ENCODE measurements at regions of chr9 and their contacts with region 1.

Region 1: DNA sequence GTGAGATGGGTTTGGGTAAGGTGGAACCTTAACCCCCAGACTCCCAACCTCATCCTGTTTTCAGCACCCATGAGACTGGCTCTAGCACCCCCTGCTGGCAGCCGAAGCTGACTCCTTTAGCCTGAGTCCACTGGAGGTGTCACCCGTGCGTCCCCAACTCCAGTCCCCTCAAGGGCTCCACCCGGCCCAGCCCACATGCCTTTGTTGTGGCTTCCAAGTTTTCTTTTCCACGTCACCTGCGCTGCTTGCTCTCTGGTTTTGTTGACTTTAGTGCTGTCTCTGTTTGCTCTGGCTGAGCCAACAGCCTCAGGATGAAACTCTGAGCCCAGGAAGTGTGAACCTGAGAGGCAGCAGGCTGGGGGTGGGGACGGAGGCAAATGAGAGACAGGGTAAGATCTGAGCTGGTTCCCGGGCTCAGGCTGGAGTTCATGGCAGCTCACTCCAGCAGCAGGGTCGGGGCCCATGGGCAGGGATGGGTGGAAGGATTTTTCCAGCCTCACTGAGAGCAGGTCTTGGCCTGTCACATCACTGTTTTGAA is 13.2 kb upstream of the AQP7 start:
- DNase-seq: peak; percentile 76 to 87 (median 78)
- ATAC-seq: peak; percentile 96
- H3K4me3 ChIP-seq: no peak overlapping the region
- H3K27ac ChIP-seq: no peak overlapping the region
- H3K4me1 ChIP-seq: peaks cover 19 to 32% of the 10 kb centered on the region in 2 experiments; a peak in 4 of 5 replicates
- H3K27me3 ChIP-seq: no peaks in the 10 kb centered on the region
- CTCF ChIP-seq: peak; percentile 77 to 90 (median 79)
- EP300 ChIP-seq: no peak
- POLR2A ChIP-seq: no peak
- RAD21 ChIP-seq: peak; percentile 42 to 66; a peak in 3 of 4 replicates

Region 2: DNA sequence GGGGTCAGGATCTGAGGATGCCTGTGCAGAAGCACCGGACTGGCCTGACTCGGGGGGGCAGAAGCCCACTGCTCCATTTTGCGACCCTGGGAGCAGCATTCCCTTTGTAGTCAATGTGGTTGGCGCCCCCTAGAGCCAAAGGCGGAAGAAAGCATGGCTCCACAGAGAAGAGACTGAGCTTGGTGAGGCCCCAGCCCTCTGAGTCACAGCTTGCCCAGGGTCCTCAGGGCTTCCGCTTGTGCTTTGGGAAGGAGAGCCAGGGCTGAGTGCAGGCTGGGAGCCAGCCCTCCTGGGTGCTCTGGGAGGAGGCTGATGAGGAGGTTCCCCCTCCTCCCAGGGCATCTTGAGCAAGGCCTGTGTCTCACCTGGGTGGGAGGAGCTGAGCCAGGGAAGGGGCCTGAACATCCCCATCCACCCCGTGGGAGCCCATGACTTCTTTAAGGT is 37.3 kb after region 1 on chr9:
- CTCF ChIA-PET with region 1: no interaction called
- POLR2A ChIA-PET with region 1: interaction called, 3 read pairs
- in situ Hi-C with region 1: no loop called
- intact Hi-C with region 1: loop called (anchors 5 kb)
- DNase-seq: peak; percentile 54 to 82 (median 64)
- ATAC-seq: peak; percentile 94
- H3K4me3 ChIP-seq: no peak overlapping the region
- H3K27ac ChIP-seq: peak overlapping the region; percentile 48; the same call in 2 of the 3 replicates
- H3K4me1 ChIP-seq: peaks cover 16% of the 10 kb centered on the region in 2 experiments
- H3K27me3 ChIP-seq: no peaks in the 10 kb centered on the region
- CTCF ChIP-seq: peak; percentile 64 to 90 (median 73)
- EP300 ChIP-seq: no peak
- POLR2A ChIP-seq: no peak
- RAD21 ChIP-seq: peak; percentile 39 to 71; a peak in 3 of 4 replicates

Measured in K562 (cell line).